Endothelial cell of umbilical vein (primary cell): ENCODE measurements at regions of chr6 and their contacts with region 1.

Region 1: GRCh38 chr6:8063761-8064637 is at the start of gene BLOC1S5:
- DNase-seq: peak; percentile 98
- H3K4me3 ChIP-seq: peak within 1 kb of the TSS; percentile 59 to 88 (median 76)
- H3K27ac ChIP-seq: peak within 1 kb of the TSS; percentile 76
- H3K4me1 ChIP-seq: peaks cover 18% of the 10 kb centered on the region
- H3K27me3 ChIP-seq: no peaks in the 10 kb centered on the region
- CTCF ChIP-seq: peak in 1 of 2 donors; percentile 13
- POLR2A ChIP-seq: peak; percentile 87
- total RNA-seq, gene BLOC1S5: 16.3 and 19.1 TPM in 2 replicates

Region 2: GRCh38 chr6:7312616-7313504 is 751.1 kb before region 1 on chr6 and contains the start of gene SSR1:
- CTCF ChIA-PET with region 1: no interaction called
- POLR2A ChIA-PET with region 1: no interaction called
- dilution Hi-C with region 1: no loop called
- intact Hi-C with region 1: loop called (anchors 5 kb)
- DNase-seq: peak; percentile 98
- H3K4me3 ChIP-seq: peak within 1 kb of the TSS; percentile 95 to 99 (median 98)
- H3K27ac ChIP-seq: peak within 1 kb of the TSS; percentile 88
- H3K4me1 ChIP-seq: peaks cover 16% of the 10 kb centered on the region
- H3K27me3 ChIP-seq: peaks cover 0 to 2% of the 10 kb centered on the region in 2 experiments
- CTCF ChIP-seq: no peak
- POLR2A ChIP-seq: peak; percentile 89
- total RNA-seq, gene SSR1: 149 and 187 TPM in 2 replicates

Region 3: DNA sequence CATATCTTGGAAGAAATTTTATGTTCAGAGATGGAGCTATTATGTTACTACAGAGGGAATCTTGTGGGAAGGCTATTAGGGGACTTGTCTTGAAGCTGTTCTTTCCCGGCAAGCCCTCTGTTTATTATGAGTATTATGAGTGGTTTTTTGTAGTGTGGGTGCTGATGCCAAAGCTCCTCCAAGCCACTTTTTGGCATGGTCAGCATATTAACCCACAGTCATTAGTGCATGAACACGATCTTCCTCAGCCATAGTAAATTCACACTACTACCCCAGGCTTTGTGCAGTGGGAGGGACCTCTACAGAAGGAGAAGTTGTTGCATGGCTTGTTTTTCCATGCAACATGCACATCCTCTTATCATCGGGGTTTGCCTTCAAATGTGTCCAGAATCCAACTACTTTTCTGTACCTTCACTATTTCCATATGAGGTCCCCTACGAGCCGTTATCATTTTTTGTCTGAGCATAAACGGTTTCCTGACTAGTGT is 344.6 kb before region 1 on chr6:
- CTCF ChIA-PET with region 1: interaction called, 127 read pairs
- POLR2A ChIA-PET with region 1: no interaction called
- dilution Hi-C with region 1: no loop called
- intact Hi-C with region 1: loop called (anchors 1 kb)
- DNase-seq: no peak
- H3K4me3 ChIP-seq: no peak overlapping the region
- H3K27ac ChIP-seq: no peak overlapping the region
- H3K4me1 ChIP-seq: peaks cover 10% of the 10 kb centered on the region
- H3K27me3 ChIP-seq: no peaks in the 10 kb centered on the region
- CTCF ChIP-seq: no peak
- POLR2A ChIP-seq: no peak

Region 4: DNA sequence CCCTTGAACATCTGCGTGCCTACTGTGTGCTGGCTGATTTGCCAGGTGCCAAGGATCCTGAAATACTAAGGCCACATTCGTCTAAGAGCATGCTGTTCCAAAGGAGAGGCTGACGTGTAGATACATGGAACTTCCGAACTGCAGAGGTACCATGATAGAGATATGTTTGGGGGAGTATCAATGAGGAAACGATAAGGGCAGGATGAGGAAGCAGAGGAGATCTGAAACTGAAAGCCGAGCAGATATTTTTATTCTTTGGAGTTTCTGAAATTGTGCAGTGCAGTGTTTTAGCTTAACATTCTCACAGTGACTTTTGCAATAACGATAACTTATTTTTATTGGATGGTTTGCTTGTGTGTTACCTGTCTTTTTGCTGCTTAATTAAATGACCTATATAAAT is 313.8 kb before region 1 on chr6:
- CTCF ChIA-PET with region 1: no interaction called
- POLR2A ChIA-PET with region 1: no interaction called
- dilution Hi-C with region 1: no loop called
- intact Hi-C with region 1: no loop called
- DNase-seq: no peak
- H3K4me3 ChIP-seq: no peak overlapping the region
- H3K27ac ChIP-seq: no peak overlapping the region
- H3K4me1 ChIP-seq: peaks cover 21% of the 10 kb centered on the region
- H3K27me3 ChIP-seq: no peaks in the 10 kb centered on the region
- CTCF ChIP-seq: no peak
- POLR2A ChIP-seq: no peak

Region 5: GRCh38 chr6:7899101-7899888 is 164.7 kb before region 1 on chr6:
- CTCF ChIA-PET with region 1: interaction called, 14 read pairs
- POLR2A ChIA-PET with region 1: no interaction called
- dilution Hi-C with region 1: no loop called
- intact Hi-C with region 1: no loop called
- DNase-seq: peak; percentile 40
- H3K4me3 ChIP-seq: no peak overlapping the region
- H3K27ac ChIP-seq: peak overlapping the region; percentile 36
- H3K4me1 ChIP-seq: peaks cover 94% of the 10 kb centered on the region
- H3K27me3 ChIP-seq: no peaks in the 10 kb centered on the region
- CTCF ChIP-seq: no peak
- POLR2A ChIP-seq: peak; percentile 27

Region 6: GRCh38 chr6:8006208-8006607 is 57.8 kb before region 1 on chr6:
- CTCF ChIA-PET with region 1: interaction called, 42 read pairs
- POLR2A ChIA-PET with region 1: no interaction called
- dilution Hi-C with region 1: no loop called
- intact Hi-C with region 1: loop called (anchors 2 kb)
- DNase-seq: peak; percentile 80
- H3K4me3 ChIP-seq: no peak overlapping the region
- H3K27ac ChIP-seq: no peak overlapping the region
- H3K4me1 ChIP-seq: peaks cover 51% of the 10 kb centered on the region
- H3K27me3 ChIP-seq: no peaks in the 10 kb centered on the region
- CTCF ChIP-seq: peak; percentile 23 to 26
- POLR2A ChIP-seq: no peak

Region 7: DNA sequence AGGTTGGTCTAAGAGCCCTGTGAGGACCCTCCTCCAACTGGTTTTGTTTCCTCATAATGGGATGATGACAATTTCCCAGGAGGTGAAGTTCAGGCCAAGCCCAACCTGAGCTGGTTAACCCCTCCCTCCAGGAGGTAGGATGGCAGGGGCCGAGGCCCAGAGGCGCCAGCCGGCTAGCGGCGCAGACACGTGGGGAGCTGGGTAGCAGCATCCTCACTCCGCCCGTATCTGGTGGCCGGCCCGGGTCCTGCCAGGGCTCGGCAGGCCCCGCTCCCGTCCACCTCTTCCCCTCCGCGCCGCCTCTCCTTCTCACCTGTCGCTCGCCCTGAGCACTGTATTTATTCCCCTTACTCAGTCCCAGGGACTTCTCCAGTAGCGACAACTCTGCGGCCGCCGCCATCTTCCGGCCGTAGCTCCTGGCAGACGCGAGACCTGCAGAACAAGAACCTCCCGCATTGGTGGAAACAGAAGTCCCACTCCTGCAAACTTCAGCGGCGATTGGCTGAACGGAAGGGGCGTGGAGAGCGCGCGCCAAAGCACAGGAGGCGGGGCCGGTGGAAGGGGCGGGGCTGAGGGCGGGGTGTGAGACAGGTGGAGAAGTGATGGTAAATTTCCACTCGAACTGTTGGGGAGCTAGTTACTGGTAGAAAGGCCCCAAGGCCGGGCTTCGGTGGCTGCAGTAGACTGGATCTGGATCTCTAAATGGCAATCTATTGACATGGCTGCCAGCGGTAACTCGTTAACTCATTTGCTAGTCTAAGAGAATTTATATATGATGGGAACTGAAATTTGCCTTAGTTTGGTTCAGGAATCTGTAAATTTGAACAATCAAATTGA is 38.3 kb after region 1 on chr6 and contains the start of gene EEF1E1:
- CTCF ChIA-PET with region 1: interaction called, 8 read pairs
- POLR2A ChIA-PET with region 1: interaction called, 5 read pairs
- dilution Hi-C with region 1: no loop called
- intact Hi-C with region 1: loop called (anchors 2 kb)
- DNase-seq: peak; percentile 96
- H3K4me3 ChIP-seq: peak within 1 kb of the TSS; percentile 67 to 99 (median 89)
- H3K27ac ChIP-seq: peak within 1 kb of the TSS; percentile 70
- H3K4me1 ChIP-seq: peaks cover 15% of the 10 kb centered on the region
- H3K27me3 ChIP-seq: no peaks in the 10 kb centered on the region
- CTCF ChIP-seq: no peak
- POLR2A ChIP-seq: peak; percentile 81
- total RNA-seq, gene EEF1E1: 58.1 and 62.4 TPM in 2 replicates

Region 8: GRCh38 chr6:8219352-8219943 is 155.4 kb after region 1 on chr6:
- CTCF ChIA-PET with region 1: interaction called, 37 read pairs
- POLR2A ChIA-PET with region 1: no interaction called
- dilution Hi-C with region 1: no loop called
- intact Hi-C with region 1: loop called (anchors 1 kb)
- DNase-seq: peak; percentile 62
- H3K4me3 ChIP-seq: no peak overlapping the region
- H3K27ac ChIP-seq: no peak overlapping the region
- H3K4me1 ChIP-seq: no peaks in the 10 kb centered on the region
- H3K27me3 ChIP-seq: peaks cover 0 to 8% of the 10 kb centered on the region in 2 experiments
- CTCF ChIP-seq: peak; percentile 57 to 62
- POLR2A ChIP-seq: no peak